ENCODE measurements at regions of chr3 and their contacts with region 1.

Region 1: GRCh38 chr3:117997201-117998049 is 1037.2 kb downstream of the IGSF11 start:
- DNase-seq: peak; percentile 84
- H3K4me3 ChIP-seq: peak overlapping the region in 2 of 3 experiments; percentile 32 to 44
- H3K27ac ChIP-seq: no peak overlapping the region
- H3K4me1 ChIP-seq: peaks cover 4% of the 10 kb centered on the region
- H3K27me3 ChIP-seq: peaks cover 9 to 11% of the 10 kb centered on the region in 2 experiments
- CTCF ChIP-seq: peak; percentile 84 to 97
- POLR2A ChIP-seq: no peak

Region 2: GRCh38 chr3:117407317-117407716 is 590.1 kb before region 1 on chr3:
- CTCF ChIA-PET with region 1: interaction called, 5 read pairs
- POLR2A ChIA-PET with region 1: no interaction called
- dilution Hi-C with region 1: no loop called
- intact Hi-C with region 1: loop called (anchors 10 kb)
- DNase-seq: peak; percentile 40
- H3K4me3 ChIP-seq: no peak overlapping the region
- H3K27ac ChIP-seq: no peak overlapping the region
- H3K4me1 ChIP-seq: no peaks in the 10 kb centered on the region
- H3K27me3 ChIP-seq: no peaks in the 10 kb centered on the region
- CTCF ChIP-seq: peak; percentile 15 to 40
- POLR2A ChIP-seq: no peak

Region 3: GRCh38 chr3:117628823-117629291 is 368.6 kb before region 1 on chr3:
- CTCF ChIA-PET with region 1: no interaction called
- POLR2A ChIA-PET with region 1: no interaction called
- dilution Hi-C with region 1: no loop called
- intact Hi-C with region 1: loop called (anchors 5 kb)
- DNase-seq: peak; percentile 95
- H3K4me3 ChIP-seq: no peak overlapping the region
- H3K27ac ChIP-seq: peak overlapping the region; percentile 71
- H3K4me1 ChIP-seq: peaks cover 14% of the 10 kb centered on the region
- H3K27me3 ChIP-seq: no peaks in the 10 kb centered on the region
- CTCF ChIP-seq: no peak
- POLR2A ChIP-seq: no peak

Region 4: DNA sequence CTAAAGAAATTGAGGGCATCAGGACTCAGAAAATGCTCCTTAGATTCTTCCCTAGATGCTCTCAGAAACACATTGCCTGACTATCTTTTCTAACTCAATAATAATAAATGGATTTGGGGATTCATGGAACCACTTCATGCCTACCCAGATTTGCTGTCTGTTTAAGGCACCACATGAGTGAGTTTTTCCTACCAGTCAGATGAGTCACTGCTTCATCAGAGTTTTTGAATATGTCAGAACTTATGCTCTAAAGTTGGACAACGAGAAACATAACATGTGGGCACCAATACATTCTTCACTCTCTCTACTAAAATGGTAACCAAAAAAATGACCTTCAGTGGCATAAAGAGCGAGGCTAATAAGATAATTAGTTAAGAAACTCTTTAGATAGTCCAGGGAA is 152.7 kb before region 1 on chr3:
- CTCF ChIA-PET with region 1: no interaction called
- POLR2A ChIA-PET with region 1: no interaction called
- dilution Hi-C with region 1: no loop called
- intact Hi-C with region 1: loop called (anchors 5 kb)
- DNase-seq: no peak
- H3K4me3 ChIP-seq: no peak overlapping the region
- H3K27ac ChIP-seq: no peak overlapping the region
- H3K4me1 ChIP-seq: no peaks in the 10 kb centered on the region
- H3K27me3 ChIP-seq: no peaks in the 10 kb centered on the region
- CTCF ChIP-seq: no peak
- POLR2A ChIP-seq: no peak

Region 5: GRCh38 chr3:117885011-117885441 is 112.4 kb before region 1 on chr3:
- CTCF ChIA-PET with region 1: no interaction called
- POLR2A ChIA-PET with region 1: no interaction called
- dilution Hi-C with region 1: no loop called
- intact Hi-C with region 1: loop called (anchors 5 kb)
- DNase-seq: peak; percentile 72
- H3K4me3 ChIP-seq: no peak overlapping the region
- H3K27ac ChIP-seq: no peak overlapping the region
- H3K4me1 ChIP-seq: peaks cover 14% of the 10 kb centered on the region
- H3K27me3 ChIP-seq: no peaks in the 10 kb centered on the region
- CTCF ChIP-seq: no peak
- POLR2A ChIP-seq: no peak

Region 6: DNA sequence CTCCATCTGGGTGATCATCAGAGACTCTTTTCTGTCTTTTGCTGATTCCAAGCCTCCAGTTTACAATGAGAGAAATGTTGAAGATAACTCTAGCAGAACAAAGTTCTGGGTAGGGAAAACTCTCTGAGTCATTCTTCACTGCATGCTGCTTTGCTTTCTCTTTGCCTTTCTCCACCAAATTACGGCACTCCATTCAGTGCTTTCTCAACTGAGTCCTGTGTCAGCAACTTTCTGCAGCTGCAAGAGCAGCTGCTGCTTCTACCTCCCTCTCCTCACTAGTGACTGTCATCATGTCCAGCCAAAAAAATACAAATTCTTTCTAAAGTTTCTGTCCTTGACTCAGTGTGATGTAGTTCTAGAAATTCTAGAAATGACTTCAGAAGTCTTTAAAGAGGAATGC is 83.5 kb after region 1 on chr3:
- CTCF ChIA-PET with region 1: no interaction called
- POLR2A ChIA-PET with region 1: no interaction called
- dilution Hi-C with region 1: no loop called
- intact Hi-C with region 1: no loop called
- DNase-seq: no peak
- H3K4me3 ChIP-seq: no peak overlapping the region
- H3K27ac ChIP-seq: no peak overlapping the region
- H3K4me1 ChIP-seq: no peaks in the 10 kb centered on the region
- H3K27me3 ChIP-seq: no peaks in the 10 kb centered on the region
- CTCF ChIP-seq: no peak
- POLR2A ChIP-seq: no peak

Measured in endothelial cell of umbilical vein (primary cell).